Activated T-helper 1 cell treated with anti-CD3 and anti-CD28 coated beads, Interleukin-12 subunit alpha, Interleukin-12 subunit beta, Interleukin-2, Interleukin-4 antibody, amounts not matched to agents 30 ng/mL and 10 ng/mL and 1 ng/mL, durations not matched to agents 14 hours and 24 hours and 36 hours (primary cell): ENCODE measurements at regions of chr4 and their contacts with region 1.

Region 1: GRCh38 chr4:40719008-40719623 is 30.6 kb upstream of the NSUN7 start:
- DNase-seq: no peak
- H3K4me3 Mint-ChIP-seq: no peak overlapping the region
- H3K27ac Mint-ChIP-seq: peak overlapping the region; percentile 5
- H3K4me1 Mint-ChIP-seq: peaks cover 36% of the 10 kb centered on the region
- H3K27me3 Mint-ChIP-seq: no peaks in the 10 kb centered on the region

Region 2: GRCh38 chr4:40438384-40439026 is 280.6 kb before region 1 on chr4:
- intact Hi-C with region 1: loop called (anchors 1 kb)
- DNase-seq: no peak
- H3K4me3 Mint-ChIP-seq: peak overlapping the region; percentile 3
- H3K27ac Mint-ChIP-seq: peak overlapping the region; percentile 8
- H3K4me1 Mint-ChIP-seq: peaks cover 54% of the 10 kb centered on the region
- H3K27me3 Mint-ChIP-seq: no peaks in the 10 kb centered on the region

Region 3: DNA sequence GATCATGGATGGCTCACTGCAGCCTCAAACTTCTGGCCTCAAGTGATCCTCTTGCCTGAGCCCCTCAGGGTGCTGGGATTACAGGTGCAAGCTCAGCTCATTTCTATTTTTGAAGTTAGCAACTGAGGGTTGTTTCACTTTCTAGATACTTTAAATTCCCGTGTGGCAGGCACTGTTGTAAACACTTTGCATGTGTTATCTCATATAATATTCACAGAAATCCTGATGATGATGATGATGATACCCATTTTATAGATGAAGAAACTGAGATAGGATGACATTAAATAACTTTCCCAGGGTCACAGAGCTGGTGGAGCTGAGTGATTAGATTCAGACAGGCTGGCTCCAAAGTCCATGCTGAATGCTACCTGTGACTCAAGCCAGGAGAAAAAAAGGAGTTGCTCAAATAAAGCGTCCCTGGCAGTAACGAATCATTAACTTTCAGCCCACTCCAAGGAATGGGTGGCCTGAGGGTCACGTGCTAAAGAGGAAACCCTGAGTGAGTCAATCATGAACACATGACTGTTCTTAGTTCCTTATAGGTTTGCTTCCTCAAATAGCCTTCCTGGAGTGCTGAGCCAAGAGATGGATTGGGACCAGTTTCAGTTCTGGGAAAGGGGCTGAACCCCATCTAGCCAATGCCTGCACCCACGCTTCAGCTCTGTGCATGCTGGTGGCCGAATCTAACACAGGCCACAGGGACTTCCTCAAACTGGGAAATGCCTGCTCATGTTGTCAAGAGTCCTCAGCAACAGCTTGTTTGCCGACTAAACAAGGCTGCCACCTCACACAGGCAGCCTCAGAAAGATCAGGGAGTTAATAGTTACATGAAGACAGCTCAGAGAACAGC is 142.3 kb before region 1 on chr4:
- intact Hi-C with region 1: loop called (anchors 1 kb)
- DNase-seq: no peak
- H3K4me3 Mint-ChIP-seq: peak overlapping the region; percentile 35
- H3K27ac Mint-ChIP-seq: peak overlapping the region; percentile 74
- H3K4me1 Mint-ChIP-seq: peaks cover 57% of the 10 kb centered on the region
- H3K27me3 Mint-ChIP-seq: peaks cover 2% of the 10 kb centered on the region

Region 4: DNA sequence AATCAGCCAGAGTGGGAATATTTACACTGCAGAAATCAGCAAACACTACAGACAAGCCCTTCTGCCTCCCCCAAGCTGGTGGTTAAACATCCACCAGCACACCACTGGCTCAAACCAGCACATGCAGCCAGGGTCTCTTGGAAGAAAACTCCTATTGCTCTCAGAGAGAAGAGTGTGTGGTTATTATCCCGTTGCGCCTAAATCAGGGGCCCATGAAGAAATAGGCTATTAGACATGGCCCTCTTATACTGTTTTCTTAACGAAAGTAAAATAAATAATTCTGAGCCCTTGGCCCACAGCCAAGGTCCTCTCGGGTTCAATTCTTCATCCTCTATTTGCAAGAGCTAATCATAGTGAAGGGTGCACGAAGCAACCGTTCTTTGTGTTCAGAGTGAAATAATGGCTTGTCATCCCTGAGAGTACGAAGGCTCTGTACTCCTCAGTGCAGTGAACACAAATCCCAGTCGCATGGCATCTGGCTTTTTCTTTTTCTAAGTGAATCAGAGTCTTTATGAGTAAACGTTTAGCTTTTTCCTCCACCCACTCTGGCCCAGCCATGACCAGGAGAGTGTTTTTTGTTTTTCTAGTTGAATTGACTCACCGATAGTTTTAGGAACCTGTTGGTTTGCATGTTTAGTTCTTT is 56.0 kb before region 1 on chr4:
- intact Hi-C with region 1: loop called (anchors 1 kb)
- DNase-seq: no peak
- H3K4me3 Mint-ChIP-seq: no peak overlapping the region
- H3K27ac Mint-ChIP-seq: peak overlapping the region; percentile 81
- H3K4me1 Mint-ChIP-seq: peaks cover 31% of the 10 kb centered on the region
- H3K27me3 Mint-ChIP-seq: peaks cover 1% of the 10 kb centered on the region

Region 5: GRCh38 chr4:40687676-40688389 is 31.3 kb before region 1 on chr4:
- intact Hi-C with region 1: loop called (anchors 1 kb)
- DNase-seq: no peak
- H3K4me3 Mint-ChIP-seq: peak overlapping the region; percentile 56
- H3K27ac Mint-ChIP-seq: peak overlapping the region; percentile 97
- H3K4me1 Mint-ChIP-seq: peaks cover 27% of the 10 kb centered on the region
- H3K27me3 Mint-ChIP-seq: peaks cover 2% of the 10 kb centered on the region

Region 6: GRCh38 chr4:40763228-40763716 is 44.2 kb after region 1 on chr4:
- intact Hi-C with region 1: loop called (anchors 2 kb)
- DNase-seq: peak; percentile 55
- H3K4me3 Mint-ChIP-seq: peak overlapping the region; percentile 40
- H3K27ac Mint-ChIP-seq: peak overlapping the region; percentile 3
- H3K4me1 Mint-ChIP-seq: peaks cover 11% of the 10 kb centered on the region
- H3K27me3 Mint-ChIP-seq: no peaks in the 10 kb centered on the region

Region 7: DNA sequence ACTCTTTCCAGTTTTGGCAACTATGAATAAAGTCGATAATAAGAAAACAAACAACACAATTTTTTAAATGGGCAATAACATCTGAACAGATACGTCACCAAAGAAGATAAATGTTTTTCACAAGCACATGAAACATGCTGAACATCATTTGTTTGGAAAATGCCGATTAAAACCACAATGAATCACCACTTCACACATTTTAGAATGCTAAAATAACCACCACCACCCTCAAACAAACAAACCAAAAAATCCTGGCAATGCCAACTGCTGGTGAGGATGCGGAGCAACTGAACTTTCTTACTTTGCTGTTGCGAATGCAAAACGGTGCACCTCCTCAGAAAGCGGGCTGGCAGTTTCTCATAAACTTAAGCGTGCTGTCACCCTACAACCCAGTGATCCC is 146.6 kb after region 1 on chr4:
- intact Hi-C with region 1: no loop called
- DNase-seq: no peak
- H3K4me3 Mint-ChIP-seq: no peak overlapping the region
- H3K27ac Mint-ChIP-seq: no peak overlapping the region
- H3K4me1 Mint-ChIP-seq: no peaks in the 10 kb centered on the region
- H3K27me3 Mint-ChIP-seq: peaks cover 17% of the 10 kb centered on the region